ENCODE measurements at regions of chr12 and their contacts with region 1.

Region 1: GRCh38 chr12:75480469-75480949 is at the start of gene GLIPR1:
- DNase-seq: peak; percentile 67
- ATAC-seq: peak; percentile 89
- H3K4me3 Mint-ChIP-seq: peak within 1 kb of the TSS; percentile 88
- H3K27ac Mint-ChIP-seq: peak within 1 kb of the TSS; percentile 99
- H3K4me1 Mint-ChIP-seq: peaks cover 62% of the 10 kb centered on the region
- H3K27me3 Mint-ChIP-seq: no peaks in the 10 kb centered on the region
- total RNA-seq, gene GLIPR1: 57.9 to 63.3 TPM

Region 2: GRCh38 chr12:75390899-75391538 is 89.5 kb before region 1 on chr12 and contains the start of gene GLIPR1L2:
- POLR2A ChIA-PET with region 1: interaction called, 28 read pairs
- DNase-seq: peak; percentile 89
- ATAC-seq: peak; percentile 98
- H3K4me3 Mint-ChIP-seq: peak within 1 kb of the TSS; percentile 91
- H3K27ac Mint-ChIP-seq: peak within 1 kb of the TSS; percentile 93
- H3K4me1 Mint-ChIP-seq: peaks cover 30% of the 10 kb centered on the region
- H3K27me3 Mint-ChIP-seq: no peaks in the 10 kb centered on the region
- total RNA-seq, gene GLIPR1L2: 0.28 TPM in 1 of 2 experiments, not detected in the other

Region 3: DNA sequence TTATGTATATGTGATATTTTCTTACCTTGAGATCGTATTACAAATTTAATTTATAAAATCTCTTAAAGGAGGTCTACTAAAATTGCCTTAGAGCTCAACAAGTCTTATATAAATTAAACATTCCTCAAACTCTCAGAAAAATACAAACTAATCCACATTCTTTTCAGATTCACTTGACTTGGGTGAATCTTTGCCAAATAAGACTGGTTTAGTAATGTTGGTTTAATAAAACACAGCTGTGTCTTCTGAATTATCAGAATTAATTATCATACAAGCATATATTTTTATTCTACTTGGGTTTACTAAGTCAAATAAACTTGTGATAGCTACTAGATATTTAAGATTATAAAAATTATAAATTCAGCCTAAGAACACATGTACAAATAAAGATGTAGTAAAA is 76.3 kb before region 1 on chr12:
- POLR2A ChIA-PET with region 1: no interaction called
- DNase-seq: no peak
- ATAC-seq: no peak
- H3K4me3 Mint-ChIP-seq: no peak overlapping the region
- H3K27ac Mint-ChIP-seq: no peak overlapping the region
- H3K4me1 Mint-ChIP-seq: no peaks in the 10 kb centered on the region
- H3K27me3 Mint-ChIP-seq: peaks cover 6% of the 10 kb centered on the region

Region 4: DNA sequence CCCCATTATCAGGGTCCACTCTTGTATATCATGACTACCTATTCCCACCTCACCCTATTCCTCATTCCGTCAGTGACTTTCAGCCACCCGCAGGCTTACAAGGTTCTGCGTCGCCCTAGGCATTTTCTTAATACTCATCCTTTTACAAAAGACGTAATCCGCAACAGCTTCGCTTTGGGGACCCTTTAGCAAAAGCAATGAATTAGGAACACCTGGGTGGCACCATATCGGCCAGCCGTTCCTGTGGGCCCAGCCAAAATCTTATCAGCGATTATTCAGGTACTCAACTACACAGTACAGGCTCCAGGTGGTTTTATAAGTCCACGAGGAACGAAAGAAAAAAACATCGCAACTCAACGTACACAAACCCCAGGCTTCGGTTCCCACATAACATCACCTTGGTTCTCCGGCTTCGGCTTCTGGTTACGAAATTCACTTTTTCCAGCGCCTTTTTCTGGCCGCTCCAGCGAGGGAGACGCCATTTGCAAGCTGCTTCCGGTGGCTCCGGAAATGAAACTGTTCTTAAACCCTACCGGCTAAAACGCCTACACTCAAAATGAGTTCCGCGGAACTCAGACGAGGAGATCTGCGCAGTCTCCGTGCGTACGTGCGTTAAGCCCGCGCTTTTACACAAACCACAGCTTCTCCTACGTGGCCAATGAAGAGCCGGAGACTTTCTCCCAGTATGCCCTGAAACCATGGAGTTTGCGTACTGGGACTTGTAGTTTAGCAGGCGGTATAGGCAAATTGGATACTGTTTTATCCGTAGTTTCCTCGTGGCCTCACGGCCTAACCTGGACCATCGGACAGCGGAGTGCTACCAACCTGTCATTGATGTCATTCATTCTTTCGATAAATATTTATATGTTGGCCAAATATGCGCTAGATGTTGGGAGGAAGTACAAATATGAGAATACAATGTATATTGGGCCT is 30.9 kb after region 1 on chr12 and contains the start of gene KRR1:
- POLR2A ChIA-PET with region 1: interaction called, 11 read pairs
- DNase-seq: peak; percentile 80
- ATAC-seq: peak; percentile 99
- H3K4me3 Mint-ChIP-seq: peak within 1 kb of the TSS; percentile 99
- H3K27ac Mint-ChIP-seq: peak within 1 kb of the TSS; percentile 99
- H3K4me1 Mint-ChIP-seq: peaks cover 29% of the 10 kb centered on the region
- H3K27me3 Mint-ChIP-seq: no peaks in the 10 kb centered on the region
- total RNA-seq, gene KRR1: 59.1 to 70.6 TPM

Measured in activated naive CD8-positive, alpha-beta T cell treated with anti-CD3 and anti-CD28 coated beads, Interleukin-2, amount 10 ng/mL, durations not matched to agents 7 days and 5 days (primary cell).